ENCODE measurements at regions of chr7 and their contacts with region 1.

Region 1: GRCh38 chr7:21893388-21893787 is 52.3 kb downstream of the CDCA7L start:
- DNase-seq: no peak
- H3K4me3 ChIP-seq: no peak overlapping the region
- H3K27ac ChIP-seq: no peak overlapping the region
- H3K4me1 ChIP-seq: no peaks in the 10 kb centered on the region
- H3K27me3 ChIP-seq: no peaks in the 10 kb centered on the region
- CTCF ChIP-seq: no peak
- EP300 ChIP-seq: no peak
- POLR2A ChIP-seq: no peak
- RAD21 ChIP-seq: no peak

Region 2: DNA sequence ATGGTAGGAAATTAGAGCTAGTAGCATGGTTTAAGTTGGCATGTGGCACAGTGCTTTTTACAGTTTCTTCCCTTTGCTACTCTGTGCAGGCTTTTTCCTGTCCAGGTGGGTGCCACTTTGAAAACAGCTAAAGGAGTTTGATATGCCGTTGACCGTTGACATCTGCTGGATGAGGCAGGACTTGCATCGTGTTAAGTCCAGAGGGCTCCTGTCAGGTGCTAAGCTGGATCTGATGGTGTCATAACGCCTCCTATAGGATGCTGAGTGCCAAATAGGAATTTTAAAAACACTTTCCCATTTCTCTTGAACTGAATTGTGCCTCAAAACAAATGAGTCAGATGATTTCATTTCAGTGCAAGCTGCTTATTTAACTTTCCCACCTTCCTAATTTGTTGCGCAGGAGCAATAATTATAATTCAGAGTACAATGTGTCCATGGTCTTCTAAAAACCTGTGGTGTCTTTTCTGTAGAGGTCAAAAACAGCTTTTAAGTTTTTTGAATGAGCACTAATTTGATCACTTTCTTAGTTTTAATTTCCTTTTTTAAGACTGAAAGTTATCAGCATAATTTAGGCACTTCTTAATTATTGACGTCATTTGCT is 126.0 kb before region 1 on chr7:
- CTCF ChIA-PET with region 1: no interaction called
- POLR2A ChIA-PET with region 1: no interaction called
- DNase-seq: peak in 1 of 2 experiments; percentile 73
- H3K4me3 ChIP-seq: no peak overlapping the region
- H3K27ac ChIP-seq: no peak overlapping the region
- H3K4me1 ChIP-seq: peaks cover 0 to 14% (median 7%) of the 10 kb centered on the region in 4 experiments; a peak in 5 of 7 replicates
- H3K27me3 ChIP-seq: no peaks in the 10 kb centered on the region
- CTCF ChIP-seq: peak; percentile 79 to 100 (median 98)
- EP300 ChIP-seq: no peak
- POLR2A ChIP-seq: no peak
- RAD21 ChIP-seq: peak; percentile 100

Region 3: GRCh38 chr7:21784989-21785388 is 108.4 kb before region 1 on chr7:
- CTCF ChIA-PET with region 1: no interaction called
- POLR2A ChIA-PET with region 1: no interaction called
- DNase-seq: no peak
- H3K4me3 ChIP-seq: no peak overlapping the region
- H3K27ac ChIP-seq: no peak overlapping the region
- H3K4me1 ChIP-seq: no peaks in the 10 kb centered on the region
- H3K27me3 ChIP-seq: no peaks in the 10 kb centered on the region
- CTCF ChIP-seq: no peak
- EP300 ChIP-seq: no peak
- POLR2A ChIP-seq: no peak
- RAD21 ChIP-seq: no peak

Region 4: DNA sequence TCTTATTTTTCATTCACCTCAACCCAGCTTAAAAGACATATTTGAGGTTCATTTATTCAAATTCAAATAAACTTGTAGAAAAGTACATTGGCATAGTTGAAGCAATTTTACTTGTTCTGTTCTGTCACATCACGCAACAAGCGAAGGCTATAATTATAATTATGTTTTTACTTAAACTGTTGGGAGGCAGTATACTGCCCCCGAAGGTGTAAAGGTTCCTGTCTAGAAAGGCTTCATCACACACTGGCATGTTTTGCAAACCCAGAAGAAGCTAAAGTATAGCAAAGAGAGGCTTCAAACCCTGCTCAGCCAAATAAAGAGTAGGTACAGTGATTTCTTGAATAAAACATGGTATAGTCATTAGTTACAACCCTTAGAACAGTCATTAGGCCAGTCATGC is 10.3 kb before region 1 on chr7:
- CTCF ChIA-PET with region 1: interaction called, 15 read pairs
- POLR2A ChIA-PET with region 1: interaction called, 5 read pairs
- DNase-seq: no peak
- H3K4me3 ChIP-seq: no peak overlapping the region
- H3K27ac ChIP-seq: no peak overlapping the region
- H3K4me1 ChIP-seq: peaks cover 0 to 5% (median 0%) of the 10 kb centered on the region in 4 experiments; a peak in 3 of 7 replicates
- H3K27me3 ChIP-seq: no peaks in the 10 kb centered on the region
- CTCF ChIP-seq: peak in 1 of 3 experiments; percentile 21; a peak in 1 of 4 replicates
- EP300 ChIP-seq: no peak
- POLR2A ChIP-seq: no peak
- RAD21 ChIP-seq: 0 out of 4 replicates have a peak, but pooled peaks of 1 of the 2 experiments have one; percentile 7